ENCODE measurements at regions of chr13 and their contacts with region 1.

Region 1: DNA sequence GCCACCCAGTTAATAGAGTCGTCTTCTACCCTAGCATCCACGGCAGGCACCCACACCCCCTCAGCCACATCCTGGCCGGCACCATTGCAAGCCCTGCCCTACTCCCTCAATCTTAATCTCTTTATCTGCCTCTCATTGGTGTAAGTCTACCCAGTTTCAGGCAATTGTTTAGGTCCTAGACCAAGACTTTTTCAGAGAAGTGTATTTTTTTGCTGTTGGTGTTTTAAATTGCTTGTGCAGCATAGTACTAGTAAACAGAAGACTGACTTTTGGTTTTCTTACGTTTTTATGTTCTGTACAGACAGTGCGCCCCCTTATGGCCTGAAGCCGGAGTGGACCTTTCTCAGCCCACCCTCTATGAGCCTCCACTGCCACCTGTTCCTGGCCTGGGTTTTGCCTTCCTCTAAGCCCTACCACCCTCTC is 2.3 kb upstream of the LCP1 start:
- DNase-seq: no peak
- ATAC-seq: peak; percentile 65
- H3K4me3 ChIP-seq: peak overlapping the region; percentile 68; the same call in 1 of the 2 replicates
- H3K27ac ChIP-seq: peak overlapping the region; percentile 99
- H3K4me1 ChIP-seq: peaks cover 7% of the 10 kb centered on the region
- H3K27me3 ChIP-seq: no peaks in the 10 kb centered on the region
- CTCF ChIP-seq: peak; percentile 89 to 90 (median 90)
- EP300 ChIP-seq: no peak
- POLR2A ChIP-seq: no peak
- RAD21 ChIP-seq: peak; percentile 69

Region 2: GRCh38 chr13:45592758-45593157 is 591.5 kb before region 1 on chr13:
- CTCF ChIA-PET with region 1: no interaction called
- POLR2A ChIA-PET with region 1: no interaction called
- RAD21 ChIA-PET with region 1: no interaction called
- SMC1A ChIA-PET with region 1: no interaction called
- in situ Hi-C with region 1: no loop called
- intact Hi-C with region 1: no loop called
- DNase-seq: no peak
- ATAC-seq: peak; percentile 65
- H3K4me3 ChIP-seq: no peak overlapping the region
- H3K27ac ChIP-seq: no peak overlapping the region
- H3K4me1 ChIP-seq: no peaks in the 10 kb centered on the region; the same call in 1 of the 2 replicates
- H3K27me3 ChIP-seq: no peaks in the 10 kb centered on the region
- CTCF ChIP-seq: no peak
- EP300 ChIP-seq: no peak
- POLR2A ChIP-seq: no peak
- RAD21 ChIP-seq: no peak

Region 3: DNA sequence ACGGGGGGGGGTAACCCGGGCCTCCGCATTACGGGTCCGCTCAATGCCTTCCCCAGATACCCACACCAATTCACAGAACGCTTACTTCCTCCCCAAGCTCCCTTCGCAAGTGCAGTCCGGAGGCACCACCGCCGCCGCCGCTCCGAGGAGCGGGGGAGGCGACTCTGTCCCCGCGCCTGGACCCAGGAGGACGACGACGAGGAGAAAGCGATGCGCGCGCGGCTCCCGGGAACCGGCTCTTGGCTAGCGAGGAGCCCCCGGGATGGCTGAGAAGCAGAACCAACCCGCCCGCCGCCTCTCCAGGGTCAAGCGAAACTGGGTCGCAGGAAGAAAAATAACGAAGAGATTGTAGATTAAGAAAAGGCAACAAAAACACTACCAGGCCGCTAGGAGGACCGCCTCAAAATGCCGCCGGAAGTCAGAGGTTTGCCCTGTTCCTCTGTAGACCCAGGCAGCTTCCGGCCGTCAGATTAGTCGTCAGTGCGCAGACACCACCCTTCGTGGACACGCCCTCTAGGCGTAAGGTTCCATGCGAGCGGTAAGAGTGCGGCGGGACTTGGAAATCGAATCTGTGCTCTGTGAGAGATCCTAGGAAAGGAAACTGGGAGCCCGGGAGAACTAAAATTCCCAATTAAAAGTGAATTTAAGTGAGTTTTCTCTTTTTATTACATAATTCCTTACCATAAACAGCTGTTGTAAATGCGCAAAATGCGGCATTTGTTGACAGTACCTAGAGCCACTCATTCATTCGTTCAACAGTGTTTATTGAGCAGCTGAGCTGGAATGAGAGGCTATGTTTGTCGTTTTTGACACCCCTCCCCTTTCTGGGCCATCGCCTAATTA is 131.7 kb before region 1 on chr13 and contains the start of gene ZC3H13:
- CTCF ChIA-PET with region 1: no interaction called
- POLR2A ChIA-PET with region 1: interaction called, 4 read pairs
- RAD21 ChIA-PET with region 1: no interaction called
- SMC1A ChIA-PET with region 1: no interaction called
- in situ Hi-C with region 1: no loop called
- intact Hi-C with region 1: loop called (anchors 5 kb)
- DNase-seq: peak; percentile 69
- ATAC-seq: peak; percentile 97
- H3K4me3 ChIP-seq: peak within 1 kb of the TSS; percentile 95
- H3K27ac ChIP-seq: peak within 1 kb of the TSS; percentile 91
- H3K4me1 ChIP-seq: no peaks in the 10 kb centered on the region
- H3K27me3 ChIP-seq: no peaks in the 10 kb centered on the region
- CTCF ChIP-seq: peak; percentile 13 to 34 (median 32); a peak in 4 of 6 replicates
- EP300 ChIP-seq: no peak
- POLR2A ChIP-seq: peak; percentile 91
- RAD21 ChIP-seq: no peak; the same call in 1 of the 2 replicates
- polyA plus RNA-seq, gene ZC3H13: 18.7 to 23.4 TPM

Region 4: DNA sequence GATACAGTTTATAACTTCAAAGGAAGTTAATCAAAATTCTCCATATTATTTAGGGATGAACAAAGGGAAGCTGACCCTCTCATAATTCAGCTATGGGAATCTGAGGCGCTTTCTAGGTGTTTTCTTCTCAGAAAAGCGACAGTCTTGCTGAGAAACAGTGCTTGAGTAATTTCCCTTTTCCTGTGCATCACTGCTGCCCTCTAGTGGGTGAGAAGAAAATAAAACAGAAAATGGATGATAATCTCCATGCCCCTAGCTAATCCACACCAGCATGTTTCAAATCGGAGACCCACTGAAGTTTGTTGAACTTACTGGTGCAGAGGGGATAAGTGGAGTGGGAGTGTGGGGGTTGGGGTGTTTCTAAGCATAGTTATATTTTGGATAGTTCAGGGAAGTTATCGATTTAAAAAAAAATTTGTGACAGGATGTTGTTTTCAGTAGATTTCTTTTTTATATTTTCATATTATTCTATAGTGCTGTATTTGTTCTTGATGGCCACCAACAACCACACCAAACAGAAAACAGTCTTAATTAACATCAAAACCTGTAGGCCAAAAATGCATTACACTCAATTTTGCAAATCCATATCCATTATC is 23.7 kb before region 1 on chr13:
- CTCF ChIA-PET with region 1: interaction called, 172 read pairs
- POLR2A ChIA-PET with region 1: interaction called, 95 read pairs
- RAD21 ChIA-PET with region 1: interaction called, 184 read pairs
- SMC1A ChIA-PET with region 1: interaction called, 295 read pairs
- in situ Hi-C with region 1: no loop called
- intact Hi-C with region 1: no loop called
- DNase-seq: no peak
- ATAC-seq: peak; percentile 54
- H3K4me3 ChIP-seq: peak overlapping the region; percentile 47
- H3K27ac ChIP-seq: peak overlapping the region; percentile 53; the same call in 1 of the 2 replicates
- H3K4me1 ChIP-seq: peaks cover 21% of the 10 kb centered on the region
- H3K27me3 ChIP-seq: no peaks in the 10 kb centered on the region
- CTCF ChIP-seq: peak; percentile 70 to 79 (median 78)
- EP300 ChIP-seq: no peak
- POLR2A ChIP-seq: no peak
- RAD21 ChIP-seq: peak; percentile 67

Region 5: DNA sequence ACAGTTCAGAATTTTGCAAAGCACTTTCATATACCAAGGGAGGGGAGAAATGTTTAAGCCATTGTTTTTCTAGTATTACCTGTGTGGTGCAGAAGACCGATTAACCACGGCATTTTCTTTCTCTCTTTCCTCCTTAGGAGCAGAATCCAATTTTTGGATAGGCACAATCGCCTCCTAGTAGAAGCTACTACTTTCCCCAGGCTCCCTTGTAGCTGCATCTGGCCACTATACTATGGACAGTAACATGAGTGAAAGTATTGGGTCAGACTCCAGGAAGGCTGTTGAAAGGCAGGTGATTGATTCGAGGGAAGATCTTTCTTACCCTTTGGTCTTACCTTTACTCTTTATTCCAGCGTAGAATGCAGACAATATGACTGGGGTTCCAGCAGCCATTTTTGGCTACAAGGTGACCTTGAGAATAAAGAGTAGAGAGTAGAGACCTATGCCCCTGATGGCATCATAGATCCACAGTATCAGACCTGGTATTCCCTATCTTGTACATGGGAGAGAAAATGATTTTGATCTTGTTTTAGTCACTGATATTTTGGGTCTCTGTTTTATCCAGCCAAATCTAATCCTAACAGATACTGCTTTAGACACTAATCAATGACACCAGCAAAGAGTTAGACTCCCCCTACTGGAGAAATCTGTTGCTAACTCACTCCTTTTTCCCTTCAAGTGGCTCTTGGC is 104.4 kb after region 1 on chr13:
- CTCF ChIA-PET with region 1: no interaction called
- POLR2A ChIA-PET with region 1: no interaction called
- RAD21 ChIA-PET with region 1: no interaction called
- SMC1A ChIA-PET with region 1: interaction called, 3 read pairs
- in situ Hi-C with region 1: no loop called
- intact Hi-C with region 1: loop called (anchors 5 kb)
- DNase-seq: peak; percentile 19
- ATAC-seq: peak; percentile 95
- H3K4me3 ChIP-seq: no peak overlapping the region
- H3K27ac ChIP-seq: no peak overlapping the region
- H3K4me1 ChIP-seq: no peaks in the 10 kb centered on the region
- H3K27me3 ChIP-seq: no peaks in the 10 kb centered on the region
- CTCF ChIP-seq: peak; percentile 78 to 84 (median 79)
- EP300 ChIP-seq: no peak
- POLR2A ChIP-seq: no peak
- RAD21 ChIP-seq: peak; percentile 93